K562 (cell line): ENCODE measurements at regions of chr20 and their contacts with region 1.

Region 1: DNA sequence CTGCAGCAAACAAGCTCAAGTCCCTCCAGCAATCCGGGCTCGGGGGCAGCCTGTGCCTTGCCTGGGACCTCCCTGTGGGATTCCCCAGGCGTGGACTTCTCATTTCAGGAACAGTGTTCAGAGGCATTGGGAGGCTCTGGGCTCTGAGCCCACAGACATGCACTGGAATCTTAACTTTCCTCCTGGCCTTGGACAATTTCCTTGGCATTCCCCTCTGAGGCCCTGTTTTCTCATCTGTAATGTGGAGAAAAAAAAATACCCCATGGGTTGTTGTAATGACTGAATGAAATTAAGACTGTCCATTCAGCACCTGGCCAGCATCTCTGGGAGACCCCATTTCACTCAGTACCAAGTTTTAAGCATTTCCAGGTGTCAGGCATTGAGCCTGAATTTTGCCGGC is 17.6 kb downstream of the BPIFB4 start:
- DNase-seq: no peak
- ATAC-seq: no peak
- H3K4me3 ChIP-seq: no peak overlapping the region
- H3K27ac ChIP-seq: no peak overlapping the region
- H3K4me1 ChIP-seq: no peaks in the 10 kb centered on the region
- H3K27me3 ChIP-seq: peaks cover 0 to 12% of the 10 kb centered on the region in 2 experiments; a peak in 3 of 5 replicates
- CTCF ChIP-seq: no peak
- EP300 ChIP-seq: no peak
- POLR2A ChIP-seq: no peak
- RAD21 ChIP-seq: no peak

Region 2: DNA sequence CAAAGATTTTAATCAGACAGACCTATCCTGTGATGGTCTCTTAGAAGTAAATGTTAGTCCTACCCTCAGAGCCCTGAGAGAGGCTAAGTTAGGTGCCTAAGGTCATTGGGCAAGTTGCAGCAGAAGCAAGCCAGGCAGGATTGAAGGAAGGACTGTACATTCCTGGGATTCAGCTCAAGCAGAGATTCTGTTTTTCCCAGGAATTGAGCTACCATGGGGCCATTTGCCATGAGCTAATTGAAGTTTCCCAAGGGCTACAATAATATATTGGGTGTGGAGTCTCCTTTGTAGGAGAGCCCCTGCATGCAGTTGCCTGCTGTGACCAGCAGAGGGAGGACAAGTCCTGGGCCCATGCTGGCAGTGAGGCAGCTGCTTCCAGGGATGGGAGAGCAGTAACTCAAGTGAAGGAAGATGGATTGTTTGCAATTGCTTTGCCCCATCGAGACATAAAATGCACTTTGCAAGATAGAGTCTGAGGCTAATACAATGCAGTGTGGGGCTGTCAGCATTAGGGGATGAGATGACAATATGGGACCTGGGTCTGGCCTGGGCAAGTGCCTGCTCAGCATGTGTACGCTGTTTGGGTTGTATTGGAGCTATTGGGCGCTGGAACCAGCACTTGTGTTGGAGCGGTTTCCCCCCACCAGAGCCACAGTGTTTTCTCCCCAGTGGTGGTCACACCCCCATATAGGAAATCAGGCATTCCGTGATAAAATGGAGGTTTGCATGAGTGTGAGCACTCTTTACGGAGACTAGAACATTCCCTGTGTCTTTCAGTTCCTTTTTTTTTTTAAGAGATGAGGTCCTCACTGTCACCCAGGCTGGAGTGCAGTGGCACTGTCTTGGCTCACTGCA is 306.9 kb before region 1 on chr20:
- CTCF ChIA-PET with region 1: no interaction called
- POLR2A ChIA-PET with region 1: no interaction called
- in situ Hi-C with region 1: no loop called
- intact Hi-C with region 1: loop called (anchors 10 kb)
- DNase-seq: peak; percentile 76 to 83 (median 80)
- ATAC-seq: peak; percentile 97
- H3K4me3 ChIP-seq: no peak overlapping the region
- H3K27ac ChIP-seq: no peak overlapping the region
- H3K4me1 ChIP-seq: no peaks in the 10 kb centered on the region
- H3K27me3 ChIP-seq: no peaks in the 10 kb centered on the region
- CTCF ChIP-seq: peak; percentile 87 to 99 (median 95)
- EP300 ChIP-seq: no peak
- POLR2A ChIP-seq: no peak
- RAD21 ChIP-seq: peak; percentile 57 to 81

Region 3: DNA sequence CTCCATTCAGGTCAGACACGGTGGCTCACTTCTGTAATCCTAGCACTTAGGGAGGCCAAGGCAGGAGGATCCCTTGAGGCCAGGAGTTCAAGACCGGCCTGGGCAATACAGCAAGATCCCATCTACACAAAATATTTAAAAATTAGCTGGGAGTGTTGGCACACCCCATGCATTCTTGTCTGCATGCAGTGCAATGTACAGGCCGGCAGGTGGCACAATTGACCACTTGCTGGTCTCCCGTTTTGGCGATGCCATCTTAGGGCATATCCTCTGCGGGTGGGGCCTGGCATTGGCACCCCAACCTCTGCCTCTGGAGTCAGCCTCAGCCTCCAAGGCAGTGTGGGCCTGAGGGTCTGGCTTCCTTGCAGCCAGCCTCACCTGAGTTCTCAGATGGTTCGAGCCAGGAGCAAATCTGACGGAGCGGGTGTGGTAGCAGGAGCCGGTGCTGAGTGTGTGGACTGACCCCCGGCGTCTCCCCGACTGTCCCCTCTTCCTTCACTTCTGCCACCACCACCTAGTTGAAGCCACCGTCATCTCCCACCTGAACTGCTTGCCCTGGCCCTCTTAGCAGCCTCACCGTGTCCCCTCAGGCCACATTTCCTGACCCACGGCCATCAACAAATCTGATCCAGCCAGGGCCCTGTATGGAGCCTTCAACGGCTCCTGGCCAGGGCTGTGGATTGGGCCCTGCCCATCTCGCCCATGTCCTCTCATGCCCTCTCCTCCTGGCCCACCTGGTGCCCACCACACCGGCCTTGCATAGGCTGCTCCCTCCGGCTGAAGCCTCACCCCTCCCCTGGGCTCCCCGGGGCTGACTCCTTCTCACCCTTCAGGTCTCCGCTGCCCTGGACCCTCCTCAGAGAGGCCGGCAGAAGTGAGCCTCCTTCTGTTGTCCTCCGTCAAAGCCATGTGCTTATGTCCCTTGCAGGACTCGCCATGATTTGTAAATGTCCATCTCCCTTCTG is 194.3 kb before region 1 on chr20:
- CTCF ChIA-PET with region 1: interaction called, 22 read pairs
- POLR2A ChIA-PET with region 1: no interaction called
- in situ Hi-C with region 1: loop called (anchors 5 kb)
- intact Hi-C with region 1: loop called (anchors 1 kb)
- DNase-seq: peak; percentile 51 to 73 (median 66)
- ATAC-seq: peak; percentile 84
- H3K4me3 ChIP-seq: no peak overlapping the region
- H3K27ac ChIP-seq: no peak overlapping the region
- H3K4me1 ChIP-seq: peaks cover 0 to 9% of the 10 kb centered on the region in 2 experiments; a peak in 2 of 5 replicates
- H3K27me3 ChIP-seq: peaks cover 14 to 32% of the 10 kb centered on the region in 2 experiments; a peak in 4 of 5 replicates
- CTCF ChIP-seq: peak; percentile 91 to 94 (median 93)
- EP300 ChIP-seq: no peak
- POLR2A ChIP-seq: no peak
- RAD21 ChIP-seq: peak; percentile 76 to 91

Region 4: DNA sequence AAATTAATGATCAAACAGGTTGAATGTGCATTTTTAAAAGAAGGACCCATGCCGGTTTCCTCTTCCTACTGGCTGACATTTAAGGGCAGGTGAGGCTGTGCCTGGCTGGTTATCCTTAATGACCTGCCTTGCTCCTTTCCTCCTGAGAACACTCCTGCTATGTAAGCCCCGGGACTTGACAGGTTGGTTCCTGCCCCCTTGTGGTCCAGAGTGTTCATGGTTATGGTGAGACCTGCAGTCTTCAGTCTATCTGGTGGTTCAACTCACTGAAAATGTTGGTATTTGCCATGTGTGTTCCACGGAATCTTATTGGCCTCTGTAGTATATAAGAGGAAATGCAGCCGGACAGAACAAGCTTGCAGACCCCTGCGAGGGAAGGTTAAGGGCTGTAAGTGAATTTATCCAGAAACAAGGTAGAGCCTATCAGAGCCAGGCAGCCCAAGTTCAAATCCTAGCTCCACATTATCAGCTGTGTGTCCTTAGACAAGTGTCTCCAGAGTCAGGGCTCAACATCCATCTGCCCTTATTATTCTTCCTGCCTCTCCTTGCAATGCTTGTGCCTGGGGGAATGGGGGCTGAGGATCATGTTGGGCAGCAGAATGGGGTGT is 114.9 kb after region 1 on chr20:
- CTCF ChIA-PET with region 1: interaction called, 5 read pairs
- POLR2A ChIA-PET with region 1: interaction called, 4 read pairs
- in situ Hi-C with region 1: no loop called
- intact Hi-C with region 1: loop called (anchors 5 kb)
- DNase-seq: peak; percentile 61 to 68 (median 67)
- ATAC-seq: peak; percentile 93
- H3K4me3 ChIP-seq: no peak overlapping the region
- H3K27ac ChIP-seq: no peak overlapping the region
- H3K4me1 ChIP-seq: no peaks in the 10 kb centered on the region; a peak in 1 of 5 replicates
- H3K27me3 ChIP-seq: peaks cover 0 to 6% of the 10 kb centered on the region in 2 experiments; a peak in 4 of 5 replicates
- CTCF ChIP-seq: peak; percentile 61 to 62 (median 61); a peak in 5 of 6 replicates
- EP300 ChIP-seq: no peak
- POLR2A ChIP-seq: no peak
- RAD21 ChIP-seq: peak in 1 of 2 experiments; percentile 63; a peak in 2 of 4 replicates

Region 5: GRCh38 chr20:33291830-33292355 is 194.9 kb after region 1 on chr20:
- CTCF ChIA-PET with region 1: interaction called, 10 read pairs
- POLR2A ChIA-PET with region 1: no interaction called
- in situ Hi-C with region 1: loop called (anchors 10 kb)
- intact Hi-C with region 1: loop called (anchors 2 kb)
- DNase-seq: peak; percentile 72 to 84 (median 80)
- ATAC-seq: peak; percentile 91
- H3K4me3 ChIP-seq: no peak overlapping the region
- H3K27ac ChIP-seq: no peak overlapping the region
- H3K4me1 ChIP-seq: no peaks in the 10 kb centered on the region
- H3K27me3 ChIP-seq: peaks cover 16 to 47% of the 10 kb centered on the region in 2 experiments; a peak in 4 of 5 replicates
- CTCF ChIP-seq: peak; percentile 91 to 99 (median 94)
- EP300 ChIP-seq: no peak
- POLR2A ChIP-seq: no peak
- RAD21 ChIP-seq: peak; percentile 57 to 91

Region 6: DNA sequence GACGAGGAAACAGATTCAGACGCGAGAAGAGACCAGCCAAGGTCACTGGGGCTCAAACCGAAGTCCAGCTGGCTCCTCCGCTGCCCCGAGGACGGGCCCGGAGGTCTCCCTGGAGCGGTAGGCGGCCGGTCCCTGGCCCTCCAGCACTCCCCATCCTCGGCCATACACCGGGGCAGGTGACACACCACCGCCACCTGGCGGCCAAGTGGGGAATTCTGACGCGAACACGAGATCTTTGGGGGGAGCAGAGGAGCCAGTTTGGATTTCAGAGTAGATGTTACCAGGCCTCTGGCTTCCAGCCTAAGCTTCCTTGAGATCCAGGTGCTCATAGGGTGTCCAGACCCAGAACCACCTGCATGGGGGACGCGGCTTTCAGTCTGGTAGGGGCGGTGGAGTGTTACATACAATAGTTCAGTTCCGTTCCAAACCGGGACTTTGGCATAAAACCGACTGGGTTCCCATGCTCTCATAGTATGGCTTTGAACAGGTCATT is 202.2 kb after region 1 on chr20:
- CTCF ChIA-PET with region 1: interaction called, 14 read pairs
- POLR2A ChIA-PET with region 1: no interaction called
- in situ Hi-C with region 1: loop called (anchors 10 kb)
- intact Hi-C with region 1: no loop called
- DNase-seq: peak; percentile 82 to 90 (median 86)
- ATAC-seq: peak; percentile 98
- H3K4me3 ChIP-seq: no peak overlapping the region
- H3K27ac ChIP-seq: no peak overlapping the region
- H3K4me1 ChIP-seq: peaks cover 0 to 3% of the 10 kb centered on the region in 2 experiments; a peak in 1 of 5 replicates
- H3K27me3 ChIP-seq: peaks cover 12 to 46% of the 10 kb centered on the region in 2 experiments
- CTCF ChIP-seq: peak; percentile 89 to 97 (median 93)
- EP300 ChIP-seq: no peak
- POLR2A ChIP-seq: no peak
- RAD21 ChIP-seq: peak; percentile 52 to 83; a peak in 3 of 4 replicates